Activated T-helper 1 cell treated with anti-CD3 and anti-CD28 coated beads, Interleukin-12 subunit alpha, Interleukin-12 subunit beta, Interleukin-2, Interleukin-4 antibody, amounts not matched to agents 30 ng/mL and 10 ng/mL and 1 ng/mL, durations not matched to agents 14 hours and 24 hours and 36 hours (primary cell): ENCODE measurements at regions of chr16 and their contacts with region 1.

Region 1: DNA sequence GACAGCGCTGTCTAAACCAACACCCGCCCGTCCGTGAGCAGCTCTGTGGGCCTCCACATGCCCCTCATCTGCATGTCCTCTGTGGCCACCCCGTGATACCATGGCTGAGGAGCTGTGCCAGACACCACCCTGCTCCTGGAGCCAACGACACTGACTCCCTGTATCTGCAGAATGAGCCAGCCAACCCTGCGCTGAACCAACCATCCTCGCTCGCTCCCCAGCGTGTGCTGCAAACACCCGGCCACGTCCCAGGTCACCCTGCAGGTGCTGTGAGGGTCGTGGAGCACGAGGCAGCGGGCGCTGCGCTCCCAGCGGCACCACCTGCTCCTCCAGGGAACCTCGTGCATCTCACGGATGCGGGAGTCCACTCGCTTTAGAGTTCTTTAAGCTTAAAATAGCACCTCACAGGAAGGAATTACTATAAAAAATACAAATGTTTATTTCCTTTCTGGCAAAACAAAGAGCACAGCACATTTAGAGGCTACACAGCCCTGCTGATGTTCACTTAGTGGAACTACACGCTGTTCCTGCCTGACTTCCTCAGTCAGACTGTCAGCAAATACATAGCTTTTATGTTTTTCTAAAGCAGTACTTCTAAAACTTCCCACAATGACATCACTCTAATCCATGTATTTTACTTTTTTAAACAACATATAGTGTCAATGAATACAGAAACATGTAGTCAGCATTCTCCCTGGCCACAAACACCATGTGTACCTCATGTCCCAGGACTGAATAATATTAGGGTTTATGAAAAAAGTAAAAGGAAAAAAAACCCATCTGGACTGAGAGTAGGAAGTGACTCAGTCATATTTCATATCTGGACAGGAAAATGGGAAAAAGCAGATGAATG is 43.5 kb downstream of the MAP1LC3B start:
- DNase-seq: no peak
- H3K4me3 Mint-ChIP-seq: no peak overlapping the region
- H3K27ac Mint-ChIP-seq: no peak overlapping the region
- H3K4me1 Mint-ChIP-seq: peaks cover 14% of the 10 kb centered on the region
- H3K27me3 Mint-ChIP-seq: peaks cover 17% of the 10 kb centered on the region

Region 2: GRCh38 chr16:87375426-87376135 is 60.0 kb before region 1 on chr16:
- intact Hi-C with region 1: no loop called
- DNase-seq: no peak
- H3K4me3 Mint-ChIP-seq: no peak overlapping the region
- H3K27ac Mint-ChIP-seq: peak overlapping the region; percentile 29
- H3K4me1 Mint-ChIP-seq: peaks cover 14% of the 10 kb centered on the region
- H3K27me3 Mint-ChIP-seq: no peaks in the 10 kb centered on the region

Region 3: DNA sequence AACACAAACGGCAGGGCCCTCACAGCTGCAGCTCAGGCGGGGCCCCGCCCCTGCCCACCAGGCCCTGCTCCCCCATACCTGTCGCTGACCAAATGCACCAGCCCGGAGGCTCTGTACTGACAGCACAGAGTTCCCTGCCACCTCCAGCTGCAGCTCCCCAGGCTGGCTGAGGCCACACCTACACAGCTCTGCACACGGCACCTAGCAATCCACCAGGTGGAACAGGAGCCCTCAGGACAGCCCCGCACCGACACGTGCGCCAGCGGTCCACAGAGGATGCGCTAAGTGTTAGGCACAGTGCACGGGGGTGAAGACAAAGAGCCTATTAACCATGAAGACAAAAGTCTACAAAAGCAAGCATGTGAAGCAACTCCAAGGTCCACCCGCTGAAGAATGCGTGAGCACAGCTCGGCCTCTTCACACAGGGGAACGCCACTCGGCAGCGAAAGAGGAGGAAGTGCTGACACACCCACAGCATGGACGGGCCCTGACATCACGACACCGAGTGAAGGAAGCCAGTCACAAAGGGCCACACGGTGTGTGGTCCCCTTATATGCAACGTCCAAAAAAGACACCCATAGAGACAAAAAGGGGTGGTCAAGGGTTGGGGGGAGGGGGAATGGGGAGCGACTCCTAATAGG is 51.9 kb after region 1 on chr16:
- intact Hi-C with region 1: loop called (anchors 2 kb)
- DNase-seq: no peak
- H3K4me3 Mint-ChIP-seq: no peak overlapping the region
- H3K27ac Mint-ChIP-seq: no peak overlapping the region
- H3K4me1 Mint-ChIP-seq: peaks cover 48% of the 10 kb centered on the region
- H3K27me3 Mint-ChIP-seq: peaks cover 19% of the 10 kb centered on the region

Region 4: GRCh38 chr16:87492721-87493607 is 57.4 kb after region 1 on chr16 and contains the start of gene ZCCHC14:
- intact Hi-C with region 1: loop called (anchors 2 kb)
- DNase-seq: peak; percentile 98
- H3K4me3 Mint-ChIP-seq: peak within 1 kb of the TSS; percentile 80
- H3K27ac Mint-ChIP-seq: peak within 1 kb of the TSS; percentile 82
- H3K4me1 Mint-ChIP-seq: peaks cover 53% of the 10 kb centered on the region
- H3K27me3 Mint-ChIP-seq: peaks cover 34% of the 10 kb centered on the region
- total RNA-seq, gene ZCCHC14: 9.9 and 11.0 TPM in 2 replicates

Region 5: GRCh38 chr16:87608400-87608985 is 172.9 kb after region 1 on chr16:
- intact Hi-C with region 1: no loop called
- DNase-seq: peak; percentile 27
- H3K4me3 Mint-ChIP-seq: no peak overlapping the region
- H3K27ac Mint-ChIP-seq: no peak overlapping the region
- H3K4me1 Mint-ChIP-seq: no peaks in the 10 kb centered on the region
- H3K27me3 Mint-ChIP-seq: peaks cover 24% of the 10 kb centered on the region

Region 6: DNA sequence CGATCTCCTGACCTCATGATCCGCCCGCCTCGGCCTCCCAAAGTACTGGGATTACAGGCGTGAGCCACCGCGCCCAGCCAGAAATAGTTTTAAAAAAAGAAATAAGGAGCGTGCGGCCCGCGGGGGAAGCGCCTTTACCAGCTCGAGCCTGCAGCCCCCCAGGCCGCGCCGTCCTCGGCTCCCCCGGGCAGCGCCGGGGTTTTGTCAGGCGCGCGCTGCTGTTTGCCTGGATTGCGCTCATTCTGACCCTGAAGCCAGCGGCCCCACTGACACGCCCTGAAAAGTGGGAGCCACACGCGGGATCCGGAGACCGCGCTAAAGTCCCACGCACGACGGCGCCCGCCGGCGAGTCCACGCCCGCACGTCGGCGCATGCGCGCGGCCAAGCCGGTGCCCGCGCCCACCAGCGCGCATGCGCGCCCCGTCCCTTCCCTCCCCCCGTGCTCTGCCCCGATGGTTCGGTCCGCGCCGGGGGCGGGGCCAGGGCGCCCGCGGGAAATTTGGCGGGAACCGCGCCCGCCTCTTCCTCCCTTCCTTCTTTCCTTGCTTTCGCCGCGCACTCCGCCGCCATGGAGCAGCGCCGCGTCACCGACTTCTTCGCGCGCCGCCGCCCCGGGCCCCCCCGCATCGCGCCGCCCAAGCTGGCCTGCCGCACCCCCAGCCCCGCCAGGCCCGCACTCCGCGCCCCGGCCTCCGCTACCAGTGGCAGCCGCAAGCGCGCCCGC is 1367.8 kb after region 1 on chr16 and contains the start of gene CDT1:
- intact Hi-C with region 1: no loop called
- DNase-seq: peak; percentile 84
- H3K4me3 Mint-ChIP-seq: peak within 1 kb of the TSS; percentile 85
- H3K27ac Mint-ChIP-seq: peak within 1 kb of the TSS; percentile 84
- H3K4me1 Mint-ChIP-seq: peaks cover 15% of the 10 kb centered on the region
- H3K27me3 Mint-ChIP-seq: no peaks in the 10 kb centered on the region
- total RNA-seq, gene CDT1: 95.4 and 97.3 TPM in 2 replicates